Endothelial cell of umbilical vein (primary cell): ENCODE measurements at regions of chr12 and their contacts with region 1.

Region 1: DNA sequence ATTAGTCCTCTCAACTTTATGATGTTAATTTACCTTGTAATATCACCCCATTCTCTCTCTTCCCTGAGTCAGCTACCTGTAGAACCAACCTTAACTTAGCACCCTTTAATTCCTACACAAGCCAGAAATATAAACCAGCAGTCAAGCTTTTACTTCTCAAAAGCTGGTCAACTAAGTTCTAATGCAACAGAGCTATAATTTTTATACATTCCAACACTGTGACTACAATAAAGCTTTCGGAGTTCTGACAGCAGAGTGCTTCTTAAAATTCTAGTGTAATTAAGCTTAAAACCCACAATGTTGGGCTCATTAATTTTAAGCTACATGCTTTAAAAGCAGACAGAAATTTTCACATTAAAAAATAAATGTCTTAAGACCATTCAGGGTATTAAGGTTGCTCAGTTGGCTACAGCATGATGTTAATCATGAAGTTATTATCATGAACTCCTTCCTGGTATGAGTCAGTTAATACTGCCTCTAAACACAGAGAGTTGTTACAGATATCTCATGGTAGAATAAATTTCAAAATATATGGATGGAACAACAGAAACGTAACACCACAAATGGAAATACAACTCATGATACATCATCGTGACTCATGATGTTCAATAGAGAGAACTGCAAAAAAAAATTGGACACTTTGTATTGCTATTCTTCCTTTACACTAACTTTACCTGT is 126.7 kb downstream of the EPS8 start:
- DNase-seq: peak; percentile 61
- H3K4me3 ChIP-seq: no peak overlapping the region
- H3K27ac ChIP-seq: peak overlapping the region; percentile 66
- H3K4me1 ChIP-seq: peaks cover 16% of the 10 kb centered on the region
- H3K27me3 ChIP-seq: no peaks in the 10 kb centered on the region
- CTCF ChIP-seq: no peak
- POLR2A ChIP-seq: no peak

Region 2: DNA sequence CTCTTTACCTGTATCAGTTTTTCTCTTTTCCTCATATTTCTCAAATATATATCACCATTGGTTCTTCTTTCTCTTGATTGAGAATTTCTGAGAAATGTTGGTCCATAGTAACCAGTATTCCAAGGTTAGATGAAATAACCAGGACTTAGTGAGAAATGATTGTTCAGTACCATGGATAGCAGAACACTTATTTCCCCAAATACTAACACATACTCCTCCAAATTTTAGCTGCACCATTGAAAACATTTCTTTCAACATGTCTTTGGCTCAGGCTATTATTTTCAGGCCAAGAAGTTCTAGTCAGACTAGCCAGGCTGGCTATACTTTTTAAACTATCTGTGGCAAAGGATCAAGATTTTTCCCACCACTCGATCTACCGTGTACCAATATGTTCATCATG is 226.8 kb before region 1 on chr12:
- CTCF ChIA-PET with region 1: no interaction called
- POLR2A ChIA-PET with region 1: no interaction called
- dilution Hi-C with region 1: no loop called
- intact Hi-C with region 1: no loop called
- DNase-seq: no peak
- H3K4me3 ChIP-seq: no peak overlapping the region
- H3K27ac ChIP-seq: no peak overlapping the region
- H3K4me1 ChIP-seq: no peaks in the 10 kb centered on the region
- H3K27me3 ChIP-seq: no peaks in the 10 kb centered on the region
- CTCF ChIP-seq: no peak
- POLR2A ChIP-seq: no peak

Region 3: DNA sequence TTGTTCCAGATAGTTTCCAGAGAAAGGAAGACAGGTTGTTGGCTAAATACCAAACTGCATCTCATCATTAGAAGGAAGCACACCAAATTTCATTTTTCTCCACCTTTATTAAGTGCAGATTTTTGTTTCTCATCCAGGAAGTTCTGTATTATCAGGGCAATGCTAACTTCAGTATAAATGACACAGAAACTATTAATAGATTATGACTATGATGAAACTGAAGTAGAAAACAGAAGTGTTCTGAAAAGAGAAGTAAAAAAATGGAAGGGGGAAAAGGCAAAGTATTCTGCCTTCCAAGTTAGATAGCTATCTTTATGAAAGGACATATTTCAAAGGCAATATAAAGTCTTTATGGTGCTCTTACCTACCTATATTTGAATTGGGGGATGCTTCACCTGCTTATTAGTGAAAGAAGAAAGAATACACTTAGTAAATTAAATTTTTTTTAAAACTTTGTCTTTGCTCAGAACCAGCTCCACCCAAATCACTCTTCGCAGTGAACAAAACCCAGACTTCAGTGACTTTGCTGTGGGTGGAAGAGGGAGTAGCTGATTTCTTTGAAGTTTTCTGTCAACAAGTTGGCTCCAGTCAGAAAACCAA is 116.2 kb before region 1 on chr12:
- CTCF ChIA-PET with region 1: no interaction called
- POLR2A ChIA-PET with region 1: no interaction called
- dilution Hi-C with region 1: no loop called
- intact Hi-C with region 1: no loop called
- DNase-seq: no peak
- H3K4me3 ChIP-seq: no peak overlapping the region
- H3K27ac ChIP-seq: no peak overlapping the region
- H3K4me1 ChIP-seq: no peaks in the 10 kb centered on the region
- H3K27me3 ChIP-seq: peaks cover 2 to 3% of the 10 kb centered on the region in 2 experiments
- CTCF ChIP-seq: no peak
- POLR2A ChIP-seq: no peak

Region 4: DNA sequence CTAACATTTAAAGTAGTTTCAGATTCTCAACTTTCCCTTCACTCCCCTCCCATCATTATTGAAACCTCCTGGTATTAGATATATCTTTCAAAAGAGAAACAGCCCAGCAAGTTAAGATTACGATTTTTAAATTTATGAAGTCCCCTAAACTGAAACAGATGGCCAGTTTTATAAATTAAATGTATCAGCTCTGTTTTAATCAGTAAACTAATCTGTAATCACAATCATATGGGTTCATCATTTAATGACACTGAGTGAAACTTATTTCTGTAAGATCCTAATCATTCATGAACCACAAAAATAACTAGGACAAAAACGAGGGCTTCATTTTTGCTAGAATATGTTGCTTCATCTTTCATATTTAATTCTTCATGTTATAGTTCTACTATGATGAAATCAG is 11.1 kb before region 1 on chr12:
- CTCF ChIA-PET with region 1: no interaction called
- POLR2A ChIA-PET with region 1: no interaction called
- dilution Hi-C with region 1: no loop called
- intact Hi-C with region 1: no loop called
- DNase-seq: no peak
- H3K4me3 ChIP-seq: no peak overlapping the region
- H3K27ac ChIP-seq: no peak overlapping the region
- H3K4me1 ChIP-seq: no peaks in the 10 kb centered on the region
- H3K27me3 ChIP-seq: no peaks in the 10 kb centered on the region
- CTCF ChIP-seq: no peak
- POLR2A ChIP-seq: no peak

Region 5: GRCh38 chr12:15672671-15673270 is 10.3 kb after region 1 on chr12:
- CTCF ChIA-PET with region 1: interaction called, 12 read pairs
- POLR2A ChIA-PET with region 1: no interaction called
- dilution Hi-C with region 1: no loop called
- intact Hi-C with region 1: no loop called
- DNase-seq: no peak
- H3K4me3 ChIP-seq: no peak overlapping the region
- H3K27ac ChIP-seq: no peak overlapping the region
- H3K4me1 ChIP-seq: no peaks in the 10 kb centered on the region
- H3K27me3 ChIP-seq: no peaks in the 10 kb centered on the region
- CTCF ChIP-seq: no peak
- POLR2A ChIP-seq: no peak